ENCODE measurements at regions of chr15 and their contacts with region 1.

Region 1: DNA sequence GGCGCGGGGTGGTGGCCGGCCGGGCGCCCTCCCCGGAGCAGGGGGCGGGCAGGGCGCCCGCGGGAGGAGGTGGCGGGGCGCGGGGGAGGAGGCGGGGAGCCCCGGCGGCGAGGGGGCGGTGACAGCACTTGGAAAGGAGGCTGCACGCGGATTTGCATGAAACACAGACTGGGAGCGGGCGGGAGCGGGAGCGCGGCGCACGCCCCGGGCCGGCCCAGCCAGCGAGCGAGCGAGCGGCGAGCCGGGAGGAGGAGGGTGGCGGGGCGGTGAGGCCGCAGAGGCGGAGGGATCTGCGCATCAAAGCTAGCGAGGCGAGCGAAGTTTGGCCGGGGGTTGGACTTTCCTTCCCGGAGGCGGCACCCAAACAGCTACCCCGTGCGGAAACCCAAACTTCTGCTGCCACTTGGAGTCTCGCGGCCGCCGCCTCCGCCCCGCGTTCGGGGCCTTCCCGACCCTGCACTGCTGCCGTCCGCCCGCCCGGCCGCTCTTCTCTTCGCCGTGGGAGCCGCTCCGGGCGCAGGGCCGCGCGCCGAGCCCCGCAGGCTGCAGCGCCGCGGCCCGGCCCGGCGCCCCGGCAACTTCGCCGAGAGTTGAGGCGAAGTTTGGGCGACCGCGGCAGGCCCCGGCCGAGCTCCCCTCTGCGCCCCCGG is at the start of gene SMAD3:
- DNase-seq: peak; percentile 74
- ATAC-seq: peak; percentile 71
- H3K4me3 Mint-ChIP-seq: peak within 1 kb of the TSS; percentile 98
- H3K27ac Mint-ChIP-seq: peak within 1 kb of the TSS; percentile 95
- H3K4me1 Mint-ChIP-seq: peaks cover 47% of the 10 kb centered on the region
- H3K27me3 Mint-ChIP-seq: no peaks in the 10 kb centered on the region
- CTCF ChIP-seq: no peak
- total RNA-seq, gene SMAD3: 85.9 and 118 TPM in 2 replicates

Region 2: GRCh38 chr15:67033571-67034044 is 32.0 kb before region 1 on chr15:
- CTCF ChIA-PET with region 1: no interaction called
- POLR2A ChIA-PET with region 1: interaction called, 6 read pairs
- intact Hi-C with region 1: loop called (anchors 5 kb)
- DNase-seq: no peak
- ATAC-seq: peak; percentile 59
- H3K4me3 Mint-ChIP-seq: peak overlapping the region; percentile 51
- H3K27ac Mint-ChIP-seq: no peak overlapping the region
- H3K4me1 Mint-ChIP-seq: peaks cover 26% of the 10 kb centered on the region
- H3K27me3 Mint-ChIP-seq: peaks cover 4% of the 10 kb centered on the region
- CTCF ChIP-seq: no peak

Region 3: GRCh38 chr15:67091071-67091979 is 25.8 kb after region 1 on chr15:
- CTCF ChIA-PET with region 1: no interaction called
- POLR2A ChIA-PET with region 1: interaction called, 427 read pairs
- intact Hi-C with region 1: no loop called
- DNase-seq: no peak
- ATAC-seq: peak; percentile 46
- H3K4me3 Mint-ChIP-seq: peak overlapping the region; percentile 74
- H3K27ac Mint-ChIP-seq: peak overlapping the region; percentile 95
- H3K4me1 Mint-ChIP-seq: peaks cover 100% of the 10 kb centered on the region
- H3K27me3 Mint-ChIP-seq: no peaks in the 10 kb centered on the region
- CTCF ChIP-seq: no peak

Region 4: DNA sequence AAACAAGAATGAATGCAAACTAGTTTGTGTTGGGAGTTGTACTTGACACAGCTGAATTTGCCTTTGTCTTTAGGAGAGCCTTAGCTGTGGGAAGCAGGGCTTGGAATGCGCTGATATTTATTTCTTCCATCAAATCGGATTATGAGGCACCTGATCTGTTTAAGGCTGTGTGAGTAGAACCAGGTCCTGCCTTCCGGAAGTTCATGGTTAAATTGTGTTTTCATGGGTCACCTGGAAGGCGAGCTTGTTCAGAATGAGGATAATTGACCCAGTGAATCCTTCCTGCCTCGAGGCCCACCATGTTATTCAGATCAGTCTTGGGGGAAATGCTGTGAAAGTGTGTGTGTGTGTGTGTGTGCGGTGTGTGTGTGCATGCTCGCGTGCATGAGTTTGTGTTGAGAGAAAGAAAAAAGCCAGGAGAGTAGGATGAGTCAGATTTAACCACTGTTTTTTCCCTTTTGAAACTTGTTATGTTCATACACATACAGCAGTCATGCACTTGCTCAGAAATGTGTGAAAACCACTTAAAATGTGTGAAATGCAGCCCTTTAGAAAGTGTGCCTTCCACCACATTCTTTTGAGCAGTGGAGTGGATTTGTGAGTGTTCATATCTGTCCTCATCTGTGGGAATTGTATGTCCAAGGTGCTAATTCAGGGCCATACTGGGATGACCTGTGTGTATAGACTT is 36.5 kb after region 1 on chr15:
- CTCF ChIA-PET with region 1: interaction called, 4 read pairs
- POLR2A ChIA-PET with region 1: interaction called, 1,703 read pairs
- intact Hi-C with region 1: loop called (anchors 1 kb)
- DNase-seq: no peak
- ATAC-seq: peak; percentile 41
- H3K4me3 Mint-ChIP-seq: no peak overlapping the region
- H3K27ac Mint-ChIP-seq: no peak overlapping the region
- H3K4me1 Mint-ChIP-seq: peaks cover 33% of the 10 kb centered on the region
- H3K27me3 Mint-ChIP-seq: no peaks in the 10 kb centered on the region
- CTCF ChIP-seq: no peak

Region 5: GRCh38 chr15:67189326-67190051 is 123.9 kb after region 1 on chr15:
- CTCF ChIA-PET with region 1: no interaction called
- POLR2A ChIA-PET with region 1: interaction called, 4 read pairs
- intact Hi-C with region 1: loop called (anchors 5 kb)
- DNase-seq: no peak
- ATAC-seq: no peak
- H3K4me3 Mint-ChIP-seq: no peak overlapping the region
- H3K27ac Mint-ChIP-seq: no peak overlapping the region
- H3K4me1 Mint-ChIP-seq: peaks cover 6% of the 10 kb centered on the region
- H3K27me3 Mint-ChIP-seq: no peaks in the 10 kb centered on the region
- CTCF ChIP-seq: no peak

Region 6: GRCh38 chr15:67254238-67255175 is 188.9 kb after region 1 on chr15 and contains the starts of genes AAGAB and IQCH:
- CTCF ChIA-PET with region 1: no interaction called
- POLR2A ChIA-PET with region 1: interaction called, 7 read pairs
- intact Hi-C with region 1: loop called (anchors 1 kb)
- DNase-seq: peak; percentile 100
- ATAC-seq: peak; percentile 96
- H3K4me3 Mint-ChIP-seq: peak within 1 kb of the TSS; percentile 99
- H3K27ac Mint-ChIP-seq: peak within 1 kb of the TSS; percentile 95
- H3K4me1 Mint-ChIP-seq: peaks cover 26% of the 10 kb centered on the region
- H3K27me3 Mint-ChIP-seq: no peaks in the 10 kb centered on the region
- CTCF ChIP-seq: no peak
- total RNA-seq, gene AAGAB: 48.5 and 50.8 TPM in 2 replicates
- total RNA-seq, gene IQCH: 1.1 and 1.5 TPM in 2 replicates